Activated T-helper 2 cell treated with anti-CD3 and anti-CD28 coated beads, Interferon-gamma antibody, Interleukin-2, Interleukin-4, amounts not matched to agents 10 μg/mL and 5 μg/mL and 100 μg/mL, durations not matched to agents 14 hours and 24 hours and 36 hours (primary cell): ENCODE measurements at regions of chr11 and their contacts with region 1.

Region 1: GRCh38 chr11:86608251-86608799 is 64.1 kb downstream of the ME3 start:
- DNase-seq: no peak
- H3K4me3 Mint-ChIP-seq: no peak overlapping the region
- H3K27ac Mint-ChIP-seq: no peak overlapping the region
- H3K4me1 Mint-ChIP-seq: peaks cover 8% of the 10 kb centered on the region
- H3K27me3 Mint-ChIP-seq: no peaks in the 10 kb centered on the region

Region 2: DNA sequence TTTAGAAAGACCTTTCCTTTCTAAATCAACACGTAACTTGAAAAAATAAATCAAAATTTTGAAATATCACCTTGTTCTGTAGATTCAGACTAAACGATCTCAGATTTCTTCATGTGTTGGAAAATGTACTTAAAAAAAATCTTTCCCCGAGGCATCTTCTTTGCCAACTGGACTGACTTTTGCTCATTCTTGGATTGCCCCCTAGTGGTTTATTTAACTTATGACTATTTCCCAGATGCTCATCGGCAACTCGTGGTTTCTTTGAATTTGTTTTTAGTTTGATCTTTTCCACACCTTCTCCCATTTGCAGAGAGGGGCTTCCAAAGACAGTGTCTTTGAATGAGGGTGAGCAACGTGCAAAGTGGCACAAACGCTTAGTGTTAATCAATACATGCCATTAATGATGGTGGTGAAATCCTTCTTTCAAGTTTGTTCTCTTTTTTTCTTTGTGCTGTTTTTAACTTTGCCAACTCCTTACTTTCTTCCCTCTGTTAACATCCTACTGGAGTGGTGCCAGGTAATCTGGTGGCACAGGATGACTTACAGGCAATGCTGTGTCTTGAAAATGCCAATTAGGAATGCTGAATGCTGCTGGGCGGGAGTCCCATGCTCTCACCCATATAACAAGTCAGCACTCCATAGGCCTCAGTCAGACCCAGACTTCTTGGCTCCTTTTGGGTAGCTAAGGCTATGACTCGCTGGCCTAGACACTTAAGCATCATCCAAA is 210.3 kb after region 1 on chr11:
- intact Hi-C with region 1: loop called (anchors 1 kb)
- DNase-seq: no peak
- H3K4me3 Mint-ChIP-seq: no peak overlapping the region
- H3K27ac Mint-ChIP-seq: no peak overlapping the region
- H3K4me1 Mint-ChIP-seq: no peaks in the 10 kb centered on the region
- H3K27me3 Mint-ChIP-seq: peaks cover 20% of the 10 kb centered on the region